HEK293T (cell line): ENCODE measurements at regions of chr11 and their contacts with region 1.

Region 1: GRCh38 chr11:7513234-7514098 is at the start of gene PPFIBP2:
- DNase-seq: peak; percentile 89

Region 2: DNA sequence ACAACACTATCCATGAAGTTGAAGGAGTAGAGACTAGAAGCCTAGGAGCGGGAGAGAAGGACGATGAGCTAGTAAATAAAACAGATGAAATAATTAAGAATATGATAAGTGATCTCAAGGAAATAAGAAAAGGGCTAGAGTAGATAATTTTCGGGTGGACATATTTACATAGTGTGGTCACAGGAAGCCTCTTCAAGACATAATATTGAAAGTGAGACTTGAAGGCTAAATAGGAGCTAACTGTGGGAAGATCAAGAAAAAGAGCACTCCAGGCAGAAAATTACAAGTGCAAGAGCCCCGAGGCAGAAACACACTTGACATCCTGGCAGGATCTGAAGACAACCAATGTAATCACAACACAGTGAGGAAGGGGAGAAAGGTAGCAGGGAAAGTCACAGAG is 11.6 kb before region 1 on chr11:
- CTCF ChIA-PET with region 1: interaction called, 11 read pairs
- POLR2A ChIA-PET with region 1: no interaction called
- DNase-seq: no peak

Region 3: DNA sequence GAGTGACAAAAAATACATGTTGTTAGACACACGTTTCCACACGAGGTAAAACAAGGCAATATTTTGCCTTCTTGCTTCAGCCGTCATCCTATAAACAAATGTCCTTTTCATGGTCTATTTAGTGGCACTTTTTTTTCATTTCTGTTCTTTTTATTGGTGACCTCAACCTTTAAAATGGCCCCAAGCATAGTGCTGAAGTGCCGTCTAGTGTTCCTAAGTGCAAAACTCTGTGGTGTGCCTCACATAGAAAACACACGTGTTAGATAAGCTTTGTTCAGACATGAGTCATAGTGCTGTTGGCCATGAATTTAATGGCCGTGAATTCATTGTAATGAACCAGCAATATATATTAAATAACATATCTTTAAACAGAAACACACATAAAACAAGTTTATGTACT is 177.2 kb after region 1 on chr11:
- CTCF ChIA-PET with region 1: interaction called, 10 read pairs
- POLR2A ChIA-PET with region 1: no interaction called
- DNase-seq: peak; percentile 35